Prostate gland (tissue), 2 donors: ENCODE measurements at regions of chr3 and their contacts with region 1.

Region 1: DNA sequence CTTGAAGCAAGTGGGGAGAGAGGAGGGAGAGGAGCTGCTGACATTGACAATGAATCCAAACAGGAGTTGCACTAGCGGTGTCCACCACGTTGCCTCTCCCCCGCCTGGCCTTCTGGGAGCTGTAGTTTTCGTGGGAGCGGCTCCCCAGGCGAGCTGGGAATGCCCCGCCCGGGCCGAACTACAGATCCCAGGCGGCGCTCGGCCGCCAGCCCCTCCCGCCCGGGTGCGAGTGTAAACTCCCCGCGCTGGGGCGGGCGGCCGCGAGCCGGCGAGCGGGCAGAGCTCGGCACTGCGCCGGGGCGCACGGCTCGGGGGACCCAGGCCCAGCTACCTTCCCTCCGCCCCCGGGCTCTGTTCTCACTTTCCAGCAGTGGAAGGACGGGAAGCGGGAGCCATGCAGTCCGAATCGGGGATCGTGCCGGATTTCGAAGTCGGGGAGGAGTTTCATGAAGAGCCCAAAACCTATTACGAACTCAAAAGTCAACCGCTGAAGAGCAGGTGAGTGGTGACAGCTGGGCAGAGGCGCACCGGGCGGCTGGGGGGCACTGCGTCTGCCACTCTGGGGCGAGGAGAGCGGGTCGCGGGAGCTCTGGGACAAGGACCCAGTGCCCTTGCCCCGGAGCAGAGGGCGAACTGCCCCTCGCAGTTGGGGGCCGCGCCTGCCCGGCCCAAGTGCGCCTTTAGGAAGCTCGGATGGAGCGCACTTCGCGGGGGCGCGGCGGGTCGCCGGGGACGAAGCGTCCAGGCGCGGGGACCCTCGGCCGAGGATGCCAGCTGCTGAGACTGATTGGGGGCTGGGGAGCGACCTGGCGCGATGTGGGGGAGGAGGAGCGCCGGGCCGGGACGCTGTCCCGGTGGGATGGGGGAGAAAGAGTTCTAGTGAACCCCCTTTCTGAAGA is at the start of gene MITF:
- DNase-seq: peak; percentile 92
- H3K4me3 ChIP-seq: peak within 1 kb of the TSS; percentile 78 to 81
- H3K27ac ChIP-seq: peak within 1 kb of the TSS; percentile 78 to 81
- H3K4me1 ChIP-seq: no peaks in the 10 kb centered on the region
- H3K27me3 ChIP-seq: no peaks in the 10 kb centered on the region
- CTCF ChIP-seq: no peak
- POLR2A ChIP-seq: peak; percentile 64
- total RNA-seq, gene MITF: 7.7 to 17.6 TPM

Region 2: DNA sequence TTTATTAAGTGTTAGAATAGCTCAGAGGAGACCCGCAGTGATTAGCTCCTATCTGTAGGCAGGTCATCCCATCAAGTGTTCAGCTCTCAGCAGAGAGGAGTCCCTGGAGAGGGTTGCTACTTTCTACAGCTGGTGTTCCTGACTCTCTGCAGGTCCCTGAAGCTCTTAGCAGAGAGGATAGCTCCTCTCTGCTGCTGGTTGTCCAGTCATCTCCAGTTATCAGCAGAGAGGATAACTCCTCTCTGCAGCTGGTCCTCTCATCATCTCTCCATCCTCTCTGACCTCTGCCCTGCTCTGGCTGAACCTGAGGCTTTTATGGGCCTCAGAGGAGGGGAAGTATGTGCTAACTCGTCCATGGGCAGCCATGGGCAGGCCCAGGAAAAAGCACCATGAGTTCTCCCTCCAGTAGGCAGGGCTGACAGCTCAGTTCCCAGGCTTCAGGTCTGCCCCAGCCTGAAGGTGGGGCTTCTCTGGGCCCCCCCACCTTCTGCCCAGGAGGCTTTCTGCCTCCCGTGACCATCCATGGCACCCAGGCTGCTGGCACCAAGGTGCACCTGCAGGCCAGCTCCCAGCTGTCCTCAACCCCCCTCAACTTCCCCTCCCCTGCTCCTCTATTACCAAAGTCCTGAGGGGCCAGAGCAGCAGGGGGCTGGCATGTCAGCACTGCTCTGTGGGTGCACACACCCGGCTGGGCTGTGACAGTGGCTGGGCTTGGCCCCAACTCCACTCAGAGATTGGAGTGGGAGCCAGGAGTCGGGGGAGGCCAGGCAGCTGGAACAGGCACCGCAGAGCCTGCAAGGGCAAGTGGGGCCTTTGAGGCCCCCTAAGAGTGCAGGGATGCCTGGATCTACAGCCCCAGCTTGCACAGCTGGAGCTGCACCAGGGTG is 254.7 kb before region 1 on chr3:
- intact Hi-C with region 1: no loop called
- DNase-seq: no peak
- H3K4me3 ChIP-seq: no peak overlapping the region
- H3K27ac ChIP-seq: no peak overlapping the region
- H3K4me1 ChIP-seq: no peaks in the 10 kb centered on the region
- H3K27me3 ChIP-seq: no peaks in the 10 kb centered on the region
- CTCF ChIP-seq: no peak
- POLR2A ChIP-seq: no peak

Region 3: GRCh38 chr3:69594286-69594685 is 145.2 kb before region 1 on chr3:
- intact Hi-C with region 1: no loop called
- DNase-seq: no peak
- H3K4me3 ChIP-seq: no peak overlapping the region
- H3K27ac ChIP-seq: no peak overlapping the region
- H3K4me1 ChIP-seq: no peaks in the 10 kb centered on the region
- H3K27me3 ChIP-seq: no peaks in the 10 kb centered on the region
- CTCF ChIP-seq: no peak
- POLR2A ChIP-seq: no peak

Region 4: DNA sequence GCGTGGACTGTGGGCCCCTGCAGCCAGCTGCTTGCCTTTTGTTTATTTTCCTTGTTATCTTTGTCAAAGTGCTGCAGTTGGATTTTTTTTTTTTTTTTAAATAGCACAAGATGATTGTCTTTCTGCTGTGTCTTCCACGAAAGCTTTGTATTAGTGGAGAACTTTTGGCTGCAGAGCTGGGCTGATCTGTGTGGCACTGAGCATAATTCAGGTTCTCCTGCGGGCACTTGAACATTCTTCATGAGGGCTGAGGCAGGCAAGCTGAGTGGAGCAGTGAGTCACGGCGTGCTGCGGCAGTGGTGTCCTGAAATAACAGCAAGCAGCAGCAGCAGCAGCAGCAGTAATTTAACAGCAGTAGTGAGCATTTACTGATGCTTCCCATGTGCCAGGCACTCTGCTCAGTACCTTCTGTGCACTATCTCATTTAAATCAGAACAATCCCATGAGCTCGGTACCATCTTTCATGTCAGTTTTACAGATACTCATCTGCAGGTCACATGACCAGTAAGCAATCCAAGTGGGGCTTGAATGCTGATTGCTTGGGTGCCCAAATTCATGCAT is 45.6 kb after region 1 on chr3:
- intact Hi-C with region 1: loop called (anchors 5 kb)
- DNase-seq: no peak
- H3K4me3 ChIP-seq: no peak overlapping the region
- H3K27ac ChIP-seq: no peak overlapping the region
- H3K4me1 ChIP-seq: no peaks in the 10 kb centered on the region
- H3K27me3 ChIP-seq: no peaks in the 10 kb centered on the region
- CTCF ChIP-seq: no peak
- POLR2A ChIP-seq: no peak